HEK293T (cell line): ENCODE measurements at regions of chr4 and their contacts with region 1.

Region 1: DNA sequence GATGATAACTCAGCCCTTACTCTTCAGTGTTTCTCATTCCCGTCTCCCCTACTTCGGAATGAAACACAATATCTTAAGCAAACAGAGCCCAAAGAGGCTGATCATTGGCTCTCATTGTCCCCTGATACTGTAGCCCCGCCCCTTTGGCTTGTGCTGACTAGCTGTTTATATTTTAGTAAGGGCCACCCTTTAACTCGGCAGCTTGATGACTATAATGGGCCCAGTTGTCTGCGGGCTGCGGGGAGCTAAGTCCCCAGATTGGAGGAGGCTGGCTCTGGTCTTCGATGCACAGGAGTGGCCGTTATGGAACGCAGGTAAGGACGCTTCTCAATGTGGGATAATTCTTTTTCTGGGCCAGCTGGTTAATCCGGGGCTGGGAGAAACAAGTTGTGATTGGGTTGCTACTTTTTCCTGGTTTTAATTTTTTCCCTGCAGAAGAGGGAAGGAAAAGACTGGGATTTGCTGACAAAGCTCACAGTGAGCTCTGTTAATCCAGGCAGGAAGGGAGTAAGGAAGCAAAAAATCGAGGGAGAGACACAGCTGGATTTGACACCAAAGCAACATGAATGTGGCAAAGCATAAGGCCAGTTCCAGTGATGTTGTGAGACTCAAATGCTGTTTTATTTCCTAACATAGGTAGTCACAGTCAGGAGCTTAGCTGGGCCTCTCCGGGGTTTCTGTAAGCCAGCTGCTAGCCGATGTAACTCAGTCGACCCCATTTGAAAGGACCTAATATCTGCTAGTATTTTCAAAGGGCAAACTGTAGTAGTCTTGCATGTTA is at the start of gene TRIM2:
- DNase-seq: peak; percentile 56

Region 2: DNA sequence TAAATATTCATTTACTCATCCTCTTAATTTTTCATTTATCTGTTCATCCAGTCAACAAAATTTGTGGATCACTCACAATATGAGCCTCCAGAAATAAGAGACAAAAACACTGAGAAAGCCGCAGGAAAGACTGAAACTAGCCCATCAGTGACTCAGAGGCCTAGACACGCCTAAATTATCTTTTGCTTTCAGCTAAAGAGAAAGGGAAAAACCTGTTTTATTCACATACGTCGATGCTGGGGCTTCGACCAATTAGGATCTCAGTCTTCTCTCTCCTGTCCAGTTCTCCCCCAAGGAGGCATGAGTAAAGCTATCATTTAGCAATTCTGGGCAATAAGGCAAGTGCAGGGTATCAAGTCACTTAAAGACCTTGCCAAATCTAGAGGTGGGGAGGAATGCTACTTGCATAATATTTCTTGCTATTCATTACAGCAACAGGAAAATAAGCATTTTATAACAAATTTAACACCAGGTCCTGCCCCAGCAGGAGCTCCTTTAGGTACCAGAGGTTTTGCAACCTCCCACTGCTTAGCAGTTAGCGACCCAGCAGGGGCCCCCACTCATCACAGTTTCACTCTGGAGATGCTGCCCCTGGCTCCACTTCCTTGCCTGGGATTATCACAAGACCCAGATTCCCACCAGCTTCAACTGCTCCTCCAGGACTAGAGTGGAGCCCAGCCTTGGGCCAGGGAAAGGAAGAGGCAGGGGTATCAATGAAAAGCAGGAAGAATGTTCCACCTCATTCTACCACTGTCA is 494.6 kb before region 1 on chr4:
- CTCF ChIA-PET with region 1: no interaction called
- POLR2A ChIA-PET with region 1: no interaction called
- DNase-seq: peak; percentile 20

Region 3: DNA sequence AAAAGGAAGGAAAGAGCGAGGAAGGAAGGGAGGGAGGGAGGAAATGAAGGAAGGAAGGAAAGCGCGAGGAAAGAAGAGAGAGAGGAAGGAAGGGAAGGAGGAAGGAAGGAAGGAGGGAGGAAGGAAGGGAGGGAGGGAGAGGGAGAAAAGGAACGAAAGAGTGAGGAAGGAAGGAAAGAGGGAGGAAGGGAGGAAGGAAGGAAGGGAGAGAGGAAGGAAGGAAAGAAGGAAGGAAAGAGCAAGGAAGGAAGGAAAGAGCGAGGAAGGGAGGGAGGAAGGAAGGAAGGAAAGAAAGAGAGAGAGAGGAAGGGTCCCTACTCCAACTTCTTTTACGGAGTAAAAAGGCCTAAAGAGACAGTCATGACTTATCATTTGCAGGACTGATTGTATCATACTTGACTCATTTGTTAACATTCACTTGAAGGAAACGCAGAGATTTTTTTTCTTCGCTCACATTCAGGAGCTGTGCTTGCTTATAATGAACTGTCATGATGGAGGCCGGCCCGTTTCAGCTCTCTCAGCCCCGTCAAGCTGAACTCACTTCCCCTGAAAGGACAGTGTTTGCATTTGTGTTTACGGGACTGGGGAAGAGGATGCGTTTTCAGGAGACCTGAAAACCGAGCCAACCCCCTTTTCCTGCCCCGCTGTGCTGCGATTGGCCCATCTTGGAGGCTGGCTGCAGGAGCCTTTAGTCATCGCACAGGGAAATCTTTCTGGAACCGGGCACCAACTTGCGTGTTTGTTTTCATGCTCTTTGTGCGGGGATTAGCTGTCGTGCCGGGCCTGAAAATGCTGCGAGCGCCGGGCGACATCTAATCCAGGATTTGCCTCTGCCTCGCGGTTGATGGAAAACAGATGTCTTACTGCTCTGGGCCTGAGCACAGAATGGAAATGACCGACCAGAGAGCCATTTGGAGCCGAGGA is 17.6 kb after region 1 on chr4:
- CTCF ChIA-PET with region 1: interaction called, 7 read pairs
- POLR2A ChIA-PET with region 1: interaction called, 10 read pairs
- DNase-seq: peak; percentile 55

Region 4: DNA sequence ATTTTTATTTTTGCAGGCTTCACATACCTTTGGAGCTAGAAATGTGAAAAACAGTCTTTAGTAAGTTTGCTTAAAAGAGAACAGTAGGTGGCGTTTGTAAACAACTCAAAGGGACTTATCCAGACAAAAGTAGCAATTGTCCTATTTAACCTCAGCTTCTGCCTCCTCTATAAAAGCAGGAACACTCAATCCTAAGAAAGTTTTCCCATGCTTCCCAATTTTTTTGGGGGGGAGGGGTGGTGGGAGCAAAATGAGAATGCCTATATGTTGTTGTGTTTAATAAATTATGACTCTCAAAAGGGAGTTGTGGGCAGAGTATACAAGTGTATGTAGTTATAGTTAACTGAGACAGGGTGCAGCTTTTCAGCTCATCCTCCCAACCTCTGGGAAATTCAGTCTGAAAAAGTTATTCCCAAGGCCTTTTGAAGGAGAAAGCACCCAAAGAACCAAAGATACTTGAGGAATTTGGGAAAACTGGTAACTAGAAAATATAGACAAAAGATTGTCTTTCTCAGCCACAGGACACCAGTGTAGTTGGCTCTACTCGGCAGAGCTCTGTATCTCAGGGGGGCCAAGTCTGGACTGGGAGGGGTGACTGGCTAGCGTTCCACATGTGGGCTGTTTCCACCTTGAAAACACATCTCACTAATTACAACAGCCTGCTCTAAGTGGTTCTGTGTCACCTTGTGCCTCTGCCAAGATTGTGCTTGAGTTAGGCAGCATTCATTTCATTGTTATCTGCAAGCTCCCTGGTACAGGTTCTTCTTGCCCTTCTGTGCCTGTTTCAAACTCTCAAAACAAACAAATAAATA is 581.7 kb after region 1 on chr4:
- CTCF ChIA-PET with region 1: no interaction called
- POLR2A ChIA-PET with region 1: no interaction called
- DNase-seq: no peak